CD14-positive monocyte (primary cell): ENCODE measurements at regions of chr9 and their contacts with region 1.

Region 1: GRCh38 chr9:78044189-78044588 is 12.6 kb upstream of the GNAQ start:
- DNase-seq: no peak
- H3K4me3 ChIP-seq: no peak overlapping the region
- H3K4me3 Mint-ChIP-seq: no peak overlapping the region
- H3K27ac ChIP-seq: no peak overlapping the region
- H3K27ac Mint-ChIP-seq: peak overlapping the region in 1 of 7 donors; percentile 1
- H3K4me1 ChIP-seq: no peaks in the 10 kb centered on the region
- H3K4me1 Mint-ChIP-seq: peaks cover 2% of the 10 kb centered on the region
- H3K27me3 ChIP-seq: no peaks in the 10 kb centered on the region
- H3K27me3 Mint-ChIP-seq: peaks cover 0 to 2% (median 0%) of the 10 kb centered on the region in 3 donors
- CTCF ChIP-seq: no peak

Region 2: GRCh38 chr9:77892171-77892570 is 152.0 kb before region 1 on chr9:
- intact Hi-C with region 1: no loop called
- DNase-seq: peak in 2 of 3 donors; percentile 20 to 41
- H3K4me3 ChIP-seq: no peak overlapping the region
- H3K4me3 Mint-ChIP-seq: peak overlapping the region in 1 of 2 donors; percentile 9
- H3K27ac ChIP-seq: peak overlapping the region in 1 of 2 donors; percentile 75
- H3K27ac Mint-ChIP-seq: peak overlapping the region in 5 of 7 donors; percentile 16 to 80 (median 50)
- H3K4me1 ChIP-seq: peaks cover 0 to 10% of the 10 kb centered on the region in 2 donors
- H3K4me1 Mint-ChIP-seq: peaks cover 25% of the 10 kb centered on the region
- H3K27me3 ChIP-seq: no peaks in the 10 kb centered on the region
- H3K27me3 Mint-ChIP-seq: no peaks in the 10 kb centered on the region
- CTCF ChIP-seq: no peak

Region 3: DNA sequence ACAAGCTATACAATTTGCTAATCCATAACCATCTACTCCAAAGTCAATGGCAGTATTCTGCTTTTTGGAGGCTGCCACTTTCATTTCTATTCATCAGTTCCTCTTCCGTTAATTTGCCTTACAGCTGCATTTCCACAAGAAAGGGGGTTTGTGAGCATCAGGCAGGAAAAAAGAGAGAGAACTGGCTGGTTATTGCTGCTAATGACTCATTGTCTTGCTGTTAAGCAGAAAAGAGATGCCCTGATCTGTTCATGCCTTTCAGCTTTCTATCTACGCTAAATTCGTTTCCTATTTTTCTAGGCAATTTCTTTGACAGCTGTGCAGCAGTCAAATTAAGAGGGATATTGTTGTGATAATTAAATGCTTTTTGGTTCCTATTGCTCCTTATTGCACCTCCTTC is 53.4 kb after region 1 on chr9:
- intact Hi-C with region 1: loop called in 1 of 2 experiments (anchors 10 kb)
- DNase-seq: peak; percentile 80 to 86 (median 83)
- H3K4me3 ChIP-seq: peak overlapping the region; percentile 12 to 68 (median 49)
- H3K4me3 Mint-ChIP-seq: peak overlapping the region in 1 of 2 donors; percentile 78
- H3K27ac ChIP-seq: peak overlapping the region in 1 of 2 donors; percentile 88
- H3K27ac Mint-ChIP-seq: peak overlapping the region; percentile 74 to 93 (median 85)
- H3K4me1 ChIP-seq: peaks cover 25 to 38% of the 10 kb centered on the region in 2 donors
- H3K4me1 Mint-ChIP-seq: peaks cover 43% of the 10 kb centered on the region
- H3K27me3 ChIP-seq: no peaks in the 10 kb centered on the region
- H3K27me3 Mint-ChIP-seq: no peaks in the 10 kb centered on the region
- CTCF ChIP-seq: no peak